CD8-positive, alpha-beta memory T cell (primary cell): ENCODE measurements at regions of chr1 and their contacts with region 1.

Region 1: GRCh38 chr1:145978854-145979759 is 14.6 kb downstream of the POLR3GL start:
- DNase-seq: peak; percentile 52 to 89 (median 80)
- H3K4me3 ChIP-seq: peak overlapping the region; percentile 55
- H3K4me3 Mint-ChIP-seq: no peak overlapping the region
- H3K27ac ChIP-seq: peak overlapping the region; percentile 76
- H3K27ac Mint-ChIP-seq: no peak overlapping the region
- H3K4me1 ChIP-seq: peaks cover 69% of the 10 kb centered on the region
- H3K4me1 Mint-ChIP-seq: peaks cover 6 to 34% (median 14%) of the 10 kb centered on the region in 3 donors
- H3K27me3 ChIP-seq: no peaks in the 10 kb centered on the region
- H3K27me3 Mint-ChIP-seq: no peaks in the 10 kb centered on the region

Region 2: DNA sequence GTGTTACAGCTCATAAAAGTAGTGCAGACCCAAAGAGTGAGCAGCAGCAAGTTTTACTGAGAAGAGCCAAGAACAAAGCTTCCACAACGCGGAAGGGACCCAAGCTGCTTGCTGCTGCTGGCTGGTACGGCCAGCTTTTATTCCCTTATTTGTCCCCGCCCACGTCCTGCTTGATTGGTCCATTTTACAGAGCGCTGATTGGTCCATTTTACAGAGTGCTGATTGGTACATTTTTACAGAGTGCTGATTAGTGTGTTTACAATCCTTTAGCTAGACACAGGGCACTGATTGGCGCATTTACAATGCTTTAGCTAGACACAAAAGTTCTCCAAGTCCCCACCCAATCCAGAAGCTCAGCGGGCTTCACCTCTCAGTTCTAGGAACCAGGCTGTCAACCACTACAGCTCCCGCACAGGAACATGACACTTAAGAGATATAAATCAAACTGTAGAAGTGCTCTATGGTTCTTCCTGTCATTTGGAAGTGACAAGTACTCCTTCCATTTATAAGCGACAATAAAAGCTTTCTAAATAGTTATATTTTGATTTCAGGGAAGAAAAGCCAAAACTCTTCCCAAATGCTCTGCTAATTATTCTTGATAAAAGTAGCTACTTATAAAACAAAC is 183.7 kb before region 1 on chr1:
- CTCF ChIA-PET with region 1: no interaction called
- POLR2A ChIA-PET with region 1: no interaction called
- DNase-seq: no peak
- H3K4me3 ChIP-seq: no peak overlapping the region
- H3K4me3 Mint-ChIP-seq: peak overlapping the region in 1 of 7 donors; percentile 60
- H3K27ac ChIP-seq: no peak overlapping the region
- H3K27ac Mint-ChIP-seq: peak overlapping the region in 1 of 8 donors; percentile 69
- H3K4me1 ChIP-seq: no peaks in the 10 kb centered on the region
- H3K4me1 Mint-ChIP-seq: peaks cover 20 to 36% (median 23%) of the 10 kb centered on the region in 3 donors
- H3K27me3 ChIP-seq: no peaks in the 10 kb centered on the region
- H3K27me3 Mint-ChIP-seq: no peaks in the 10 kb centered on the region

Region 3: GRCh38 chr1:145879775-145880174 is 99.3 kb before region 1 on chr1:
- CTCF ChIA-PET with region 1: no interaction called
- POLR2A ChIA-PET with region 1: no interaction called
- DNase-seq: no peak
- H3K4me3 ChIP-seq: no peak overlapping the region
- H3K4me3 Mint-ChIP-seq: no peak overlapping the region
- H3K27ac ChIP-seq: peak overlapping the region; percentile 21
- H3K27ac Mint-ChIP-seq: no peak overlapping the region
- H3K4me1 ChIP-seq: peaks cover under 1% of the 10 kb centered on the region
- H3K4me1 Mint-ChIP-seq: peaks cover 1 to 3% (median 2%) of the 10 kb centered on the region in 3 donors
- H3K27me3 ChIP-seq: peaks cover 13% of the 10 kb centered on the region
- H3K27me3 Mint-ChIP-seq: peaks cover 21 to 38% of the 10 kb centered on the region in 2 donors

Region 4: DNA sequence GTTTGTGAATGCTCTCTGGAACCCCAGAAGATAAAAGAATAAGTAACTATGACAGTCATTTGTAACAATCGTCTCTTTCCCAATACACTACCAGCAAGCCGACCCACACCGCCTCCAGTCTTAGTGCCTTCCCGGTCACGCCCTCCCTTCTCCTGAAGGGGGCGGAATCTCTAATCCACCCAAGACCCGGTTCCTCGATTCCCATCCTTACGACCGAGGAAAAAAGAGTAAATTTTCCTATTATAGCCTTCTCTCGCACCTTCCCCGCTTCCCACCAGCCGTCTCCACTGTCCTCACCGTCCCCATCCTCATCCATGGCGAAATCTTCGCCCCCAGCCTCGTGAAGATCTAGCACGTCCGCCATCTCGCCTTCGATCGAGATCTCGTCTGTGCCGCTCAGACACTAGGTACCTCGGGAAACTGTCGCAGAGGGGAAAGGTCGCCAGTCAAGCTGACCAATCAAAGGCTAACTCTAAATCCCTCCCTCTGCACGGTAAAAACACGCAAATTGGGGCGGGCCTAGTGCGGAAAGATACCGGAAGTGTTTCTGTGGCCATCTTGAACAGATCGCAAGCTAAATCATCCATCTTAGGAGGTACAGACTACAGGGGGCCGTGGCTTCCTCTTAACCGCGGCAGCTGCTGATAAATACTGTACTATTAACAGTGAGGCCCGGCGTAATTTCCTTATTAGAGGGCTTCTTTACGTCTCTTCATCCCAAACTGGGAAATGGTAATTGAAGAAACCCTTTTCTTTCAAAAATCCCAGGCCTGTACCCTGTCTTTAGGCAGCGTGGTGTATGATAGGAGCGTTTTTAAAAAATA is 51.8 kb before region 1 on chr1 and contains the start of gene RBM8A:
- CTCF ChIA-PET with region 1: interaction called, 24 read pairs
- POLR2A ChIA-PET with region 1: interaction called, 8 read pairs
- DNase-seq: peak; percentile 85 to 97 (median 96)
- H3K4me3 ChIP-seq: peak within 1 kb of the TSS; percentile 89
- H3K4me3 Mint-ChIP-seq: peak within 1 kb of the TSS in 3 of 7 donors; percentile 47 to 84 (median 57)
- H3K27ac ChIP-seq: peak within 1 kb of the TSS; percentile 93
- H3K27ac Mint-ChIP-seq: peak within 1 kb of the TSS in 4 of 8 donors; percentile 74 to 92 (median 82)
- H3K4me1 ChIP-seq: peaks cover 29% of the 10 kb centered on the region
- H3K4me1 Mint-ChIP-seq: peaks cover 10 to 22% (median 20%) of the 10 kb centered on the region in 3 donors
- H3K27me3 ChIP-seq: no peaks in the 10 kb centered on the region
- H3K27me3 Mint-ChIP-seq: no peaks in the 10 kb centered on the region
- total RNA-seq, gene RBM8A: 387 to 397 TPM

Region 5: GRCh38 chr1:145957443-145958319 is 21.4 kb before region 1 on chr1 and contains the start of gene LIX1L:
- CTCF ChIA-PET with region 1: interaction called, 77 read pairs
- POLR2A ChIA-PET with region 1: interaction called, 6 read pairs
- DNase-seq: peak; percentile 92 to 96 (median 93)
- H3K4me3 ChIP-seq: peak within 1 kb of the TSS; percentile 94
- H3K4me3 Mint-ChIP-seq: peak within 1 kb of the TSS; percentile 83 to 98 (median 92)
- H3K27ac ChIP-seq: peak within 1 kb of the TSS; percentile 76
- H3K27ac Mint-ChIP-seq: peak within 1 kb of the TSS; percentile 91 to 98 (median 97)
- H3K4me1 ChIP-seq: peaks cover 64% of the 10 kb centered on the region
- H3K4me1 Mint-ChIP-seq: peaks cover 68 to 74% (median 74%) of the 10 kb centered on the region in 3 donors
- H3K27me3 ChIP-seq: no peaks in the 10 kb centered on the region
- H3K27me3 Mint-ChIP-seq: peaks cover 0 to 3% of the 10 kb centered on the region in 2 donors
- total RNA-seq, gene LIX1L: 41.8 to 42.6 TPM

Region 6: DNA sequence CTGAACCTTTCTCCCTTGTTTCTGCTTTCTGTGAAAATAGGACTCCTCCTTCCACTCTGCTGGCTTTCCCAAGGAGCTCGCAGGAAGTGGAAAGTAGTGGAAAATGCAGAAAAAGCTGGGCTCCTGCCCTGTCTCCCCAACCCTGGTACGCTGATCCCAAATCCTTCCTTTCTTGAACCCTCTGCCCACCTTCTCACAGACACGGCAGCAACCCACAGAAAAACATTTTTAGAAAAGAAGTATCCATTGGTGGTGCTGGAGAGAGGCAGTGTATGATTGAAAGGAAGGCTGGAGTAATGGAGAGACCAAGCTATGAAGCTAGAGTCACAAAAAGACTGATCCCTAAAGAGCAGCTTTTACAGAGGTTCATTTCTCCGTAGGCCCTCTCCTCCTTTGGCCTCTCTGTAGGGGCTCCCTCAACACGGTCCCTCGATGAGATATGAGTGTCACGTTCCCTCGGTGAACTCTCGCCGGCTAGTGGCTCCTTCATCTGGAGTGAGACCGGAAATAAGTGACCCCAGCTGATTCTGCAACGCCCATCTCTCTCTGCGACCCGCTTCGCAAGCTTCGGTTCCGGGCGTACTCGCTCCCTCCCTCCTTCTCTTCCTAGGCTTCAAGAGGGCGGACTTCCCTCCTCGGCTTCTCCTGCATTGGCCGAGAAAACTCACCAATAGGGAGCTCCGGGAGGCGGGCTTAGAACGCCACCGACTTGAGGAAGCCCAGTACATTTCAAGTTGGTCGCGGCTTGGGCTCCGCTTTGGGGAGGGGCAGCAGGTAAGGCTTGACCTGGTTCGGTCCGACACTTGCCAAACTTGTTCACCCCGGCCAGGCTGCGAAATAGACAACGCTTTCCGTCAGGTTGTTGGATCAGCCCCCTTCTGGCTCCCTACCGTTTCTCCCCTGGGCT is 14.9 kb before region 1 on chr1 and contains the starts of genes ANKRD34A and POLR3GL:
- CTCF ChIA-PET with region 1: interaction called, 77 read pairs
- POLR2A ChIA-PET with region 1: interaction called, 22 read pairs
- DNase-seq: peak; percentile 84 to 95 (median 90)
- H3K4me3 ChIP-seq: peak within 1 kb of the TSS; percentile 88
- H3K4me3 Mint-ChIP-seq: peak within 1 kb of the TSS; percentile 93 to 98 (median 96)
- H3K27ac ChIP-seq: peak within 1 kb of the TSS; percentile 71
- H3K27ac Mint-ChIP-seq: peak within 1 kb of the TSS; percentile 84 to 99 (median 96)
- H3K4me1 ChIP-seq: peaks cover 46% of the 10 kb centered on the region
- H3K4me1 Mint-ChIP-seq: peaks cover 51 to 72% (median 53%) of the 10 kb centered on the region in 3 donors
- H3K27me3 ChIP-seq: no peaks in the 10 kb centered on the region
- H3K27me3 Mint-ChIP-seq: peaks cover 0 to 3% of the 10 kb centered on the region in 2 donors
- total RNA-seq, gene ANKRD34A: 6.9 to 8.7 TPM
- total RNA-seq, gene POLR3GL: 21.6 to 22.8 TPM

Region 7: GRCh38 chr1:146007506-146008133 is 28.5 kb after region 1 on chr1:
- CTCF ChIA-PET with region 1: interaction called, 475 read pairs
- POLR2A ChIA-PET with region 1: interaction called, 38 read pairs
- DNase-seq: no peak
- H3K4me3 ChIP-seq: no peak overlapping the region
- H3K4me3 Mint-ChIP-seq: peak overlapping the region in 6 of 7 donors; percentile 69 to 87 (median 82)
- H3K27ac ChIP-seq: no peak overlapping the region
- H3K27ac Mint-ChIP-seq: peak overlapping the region; percentile 47 to 93 (median 75)
- H3K4me1 ChIP-seq: peaks cover 33% of the 10 kb centered on the region
- H3K4me1 Mint-ChIP-seq: peaks cover 31 to 50% (median 39%) of the 10 kb centered on the region in 3 donors
- H3K27me3 ChIP-seq: no peaks in the 10 kb centered on the region
- H3K27me3 Mint-ChIP-seq: no peaks in the 10 kb centered on the region

Region 8: GRCh38 chr1:146019231-146020057 is 40.3 kb after region 1 on chr1:
- CTCF ChIA-PET with region 1: interaction called, 16 read pairs
- POLR2A ChIA-PET with region 1: no interaction called
- DNase-seq: no peak
- H3K4me3 ChIP-seq: no peak overlapping the region
- H3K4me3 Mint-ChIP-seq: peak overlapping the region in 5 of 7 donors; percentile 17 to 69 (median 29)
- H3K27ac ChIP-seq: no peak overlapping the region
- H3K27ac Mint-ChIP-seq: peak overlapping the region in 2 of 8 donors; percentile 11 to 49
- H3K4me1 ChIP-seq: peaks cover 8% of the 10 kb centered on the region
- H3K4me1 Mint-ChIP-seq: peaks cover 8 to 14% (median 9%) of the 10 kb centered on the region in 3 donors
- H3K27me3 ChIP-seq: peaks cover 31% of the 10 kb centered on the region
- H3K27me3 Mint-ChIP-seq: peaks cover 21 to 74% of the 10 kb centered on the region in 2 donors

Region 9: GRCh38 chr1:146036965-146037646 is 58.0 kb after region 1 on chr1:
- CTCF ChIA-PET with region 1: interaction called, 16 read pairs
- POLR2A ChIA-PET with region 1: interaction called, 12 read pairs
- DNase-seq: peak; percentile 48 to 82 (median 79)
- H3K4me3 ChIP-seq: peak overlapping the region; percentile 88
- H3K4me3 Mint-ChIP-seq: peak overlapping the region; percentile 93 to 99 (median 97)
- H3K27ac ChIP-seq: peak overlapping the region; percentile 64
- H3K27ac Mint-ChIP-seq: peak overlapping the region; percentile 94 to 98 (median 96)
- H3K4me1 ChIP-seq: peaks cover 10% of the 10 kb centered on the region
- H3K4me1 Mint-ChIP-seq: peaks cover 37 to 52% (median 43%) of the 10 kb centered on the region in 3 donors
- H3K27me3 ChIP-seq: no peaks in the 10 kb centered on the region
- H3K27me3 Mint-ChIP-seq: peaks cover 3 to 24% of the 10 kb centered on the region in 2 donors